Activated B cell treated with CpG ODN at 0.5 μM for 24 hours (primary cell): ENCODE measurements at regions of chr10 and their contacts with region 1.

Region 1: GRCh38 chr10:107409522-107409921 is 245.0 kb upstream of the SORCS1 start:
- DNase-seq: no peak
- ATAC-seq: peak; percentile 40
- H3K4me3 Mint-ChIP-seq: no peak overlapping the region
- H3K27ac Mint-ChIP-seq: no peak overlapping the region
- H3K4me1 Mint-ChIP-seq: no peaks in the 10 kb centered on the region
- H3K27me3 Mint-ChIP-seq: no peaks in the 10 kb centered on the region
- CTCF ChIP-seq: no peak

Region 2: GRCh38 chr10:106661767-106662140 is 747.8 kb before region 1 on chr10:
- CTCF ChIA-PET with region 1: no interaction called
- POLR2A ChIA-PET with region 1: no interaction called
- intact Hi-C with region 1: no loop called
- DNase-seq: no peak
- ATAC-seq: no peak
- H3K4me3 Mint-ChIP-seq: no peak overlapping the region
- H3K27ac Mint-ChIP-seq: no peak overlapping the region
- H3K4me1 Mint-ChIP-seq: no peaks in the 10 kb centered on the region
- H3K27me3 Mint-ChIP-seq: no peaks in the 10 kb centered on the region
- CTCF ChIP-seq: no peak

Region 3: DNA sequence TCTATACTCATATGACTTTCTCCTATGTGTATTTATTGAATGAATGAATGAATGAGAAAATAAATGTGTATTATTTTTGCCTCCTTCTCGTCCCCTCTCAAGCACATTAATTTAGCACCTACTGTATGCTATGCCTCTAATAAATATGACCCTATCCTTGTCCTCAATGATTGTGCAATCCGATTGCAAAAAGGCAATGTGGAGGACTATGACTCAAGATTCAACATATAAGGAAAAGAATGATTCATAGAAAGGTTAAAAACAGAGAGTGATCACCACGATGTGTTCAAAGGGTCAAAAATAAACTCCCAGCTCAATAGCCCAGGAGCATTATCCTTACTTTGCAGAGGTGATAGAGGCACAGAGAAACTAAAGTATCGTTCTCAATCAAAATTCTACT is 77.8 kb after region 1 on chr10:
- CTCF ChIA-PET with region 1: no interaction called
- POLR2A ChIA-PET with region 1: no interaction called
- intact Hi-C with region 1: no loop called
- DNase-seq: no peak
- ATAC-seq: no peak
- H3K4me3 Mint-ChIP-seq: no peak overlapping the region
- H3K27ac Mint-ChIP-seq: no peak overlapping the region
- H3K4me1 Mint-ChIP-seq: no peaks in the 10 kb centered on the region
- H3K27me3 Mint-ChIP-seq: no peaks in the 10 kb centered on the region
- CTCF ChIP-seq: no peak

Region 4: DNA sequence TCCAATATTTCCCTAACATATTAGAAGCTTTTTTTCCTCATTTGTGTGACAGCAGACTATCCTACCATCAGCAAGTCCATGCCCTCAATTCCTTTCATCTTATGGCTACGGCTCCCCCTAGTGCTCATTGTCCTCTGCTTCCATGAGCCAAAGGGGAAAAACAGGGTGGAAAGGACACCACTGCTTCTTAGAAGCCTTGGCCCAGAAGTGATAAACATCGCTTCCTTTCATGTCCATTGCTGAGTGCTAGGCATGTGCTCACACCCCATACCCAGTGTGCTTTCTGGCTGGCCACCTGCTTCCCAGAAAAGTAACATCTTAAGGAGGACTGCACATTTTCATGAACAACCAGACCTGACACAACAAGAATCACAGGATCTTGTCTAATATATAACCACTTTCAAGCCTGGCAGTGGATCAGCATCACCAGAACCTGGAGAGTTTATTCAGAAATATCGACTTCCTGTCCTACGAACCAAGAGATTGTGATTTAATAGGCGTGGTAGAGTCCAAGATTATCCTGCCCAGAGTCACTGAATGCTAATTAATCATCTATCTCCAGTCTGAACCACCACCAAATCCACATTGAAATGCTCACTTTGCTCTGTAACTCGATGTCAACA is 405.5 kb after region 1 on chr10:
- CTCF ChIA-PET with region 1: interaction called, 28 read pairs
- POLR2A ChIA-PET with region 1: no interaction called
- intact Hi-C with region 1: loop called (anchors 1 kb)
- DNase-seq: no peak
- ATAC-seq: peak; percentile 31
- H3K4me3 Mint-ChIP-seq: no peak overlapping the region
- H3K27ac Mint-ChIP-seq: no peak overlapping the region
- H3K4me1 Mint-ChIP-seq: no peaks in the 10 kb centered on the region
- H3K27me3 Mint-ChIP-seq: no peaks in the 10 kb centered on the region
- CTCF ChIP-seq: no peak